Right ventricle myocardium inferior (tissue), 1 donor: ENCODE measurements at regions of chr3 and their contacts with region 1.

Region 1: DNA sequence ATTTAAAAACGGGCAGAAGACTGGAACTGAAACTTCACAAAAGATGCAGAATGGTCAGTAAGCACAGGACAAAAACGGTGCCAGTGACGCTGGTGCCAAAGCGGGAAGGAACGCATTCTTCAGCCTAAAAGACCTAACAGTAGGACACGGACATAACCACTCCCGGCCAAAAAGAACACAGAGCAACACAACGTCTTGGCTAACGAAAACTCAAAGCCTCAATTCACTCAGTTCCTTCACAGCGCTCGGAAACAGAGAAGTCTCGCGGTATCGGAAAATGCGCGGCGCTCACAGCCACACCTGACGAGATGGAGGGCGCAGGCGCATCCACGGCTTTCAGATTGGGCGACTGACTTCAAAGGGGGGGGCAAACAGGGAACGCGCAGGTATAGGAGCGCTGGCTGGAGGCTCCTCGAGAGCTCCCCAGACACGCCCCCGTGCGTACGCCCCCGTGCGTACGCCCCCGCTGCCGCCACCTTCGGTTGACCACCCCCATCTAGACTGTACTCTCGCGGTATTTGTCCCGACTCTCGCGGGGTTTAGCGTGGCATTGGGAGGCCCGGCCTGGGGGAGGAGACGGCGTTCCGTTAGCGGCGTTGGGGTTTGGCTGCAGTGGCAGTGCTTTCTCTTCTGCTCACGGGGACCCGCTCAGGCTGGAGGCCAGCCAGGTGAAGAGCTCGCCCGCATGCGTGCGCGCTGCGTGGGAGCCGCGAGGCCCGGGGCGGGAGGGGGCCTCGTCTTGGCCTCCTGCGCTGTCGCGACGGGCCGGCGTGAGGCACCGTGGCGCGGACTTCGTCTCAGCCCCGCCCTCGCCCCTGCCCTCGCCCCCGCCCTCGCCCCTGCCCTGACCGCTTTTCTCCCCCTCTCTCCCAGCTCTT is at the start of gene NKTR:
- DNase-seq: peak; percentile 98
- ATAC-seq: peak; percentile 95
- total RNA-seq, gene NKTR: 21.2 TPM

Region 2: GRCh38 chr3:42547401-42547945 is 52.9 kb before region 1 on chr3:
- intact Hi-C with region 1: no loop called
- DNase-seq: peak; percentile 87
- ATAC-seq: peak; percentile 64

Region 3: GRCh38 chr3:42557849-42558248 is 42.5 kb before region 1 on chr3:
- intact Hi-C with region 1: no loop called
- DNase-seq: no peak
- ATAC-seq: no peak

Region 4: GRCh38 chr3:42652611-42653302 is 52.4 kb after region 1 on chr3:
- intact Hi-C with region 1: loop called (anchors 2 kb)
- DNase-seq: peak; percentile 89
- ATAC-seq: peak; percentile 33